H1 (cell line): ENCODE measurements at regions of chr17 and their contacts with region 1.

Region 1: DNA sequence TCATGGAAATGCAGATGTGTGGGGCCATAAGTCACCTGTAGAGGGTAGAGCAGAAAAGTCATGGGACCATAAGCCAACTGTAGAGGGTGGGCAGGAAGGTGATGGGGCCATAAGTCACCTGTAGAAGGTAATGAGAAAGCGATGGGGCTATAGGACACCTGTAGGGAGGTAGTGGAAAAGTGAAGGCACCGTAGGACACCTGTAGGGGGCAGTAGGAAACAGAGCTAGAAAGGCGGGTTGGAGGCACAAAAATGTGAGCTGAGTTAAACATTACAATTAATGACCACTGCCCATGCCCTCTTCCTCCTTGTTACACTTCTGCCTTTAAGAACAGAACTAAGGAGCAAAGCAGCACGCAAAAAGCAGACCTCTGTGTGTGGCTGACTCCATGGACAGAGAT is 150.1 kb downstream of the SHISA6 start:
- DNase-seq: peak in 1 of 2 experiments; percentile 73
- H3K4me3 ChIP-seq: no peak overlapping the region
- H3K27ac ChIP-seq: no peak overlapping the region
- H3K4me1 ChIP-seq: peaks cover 0 to 3% (median 0%) of the 10 kb centered on the region in 4 experiments; a peak in 1 of 7 replicates
- H3K27me3 ChIP-seq: no peaks in the 10 kb centered on the region
- CTCF ChIP-seq: peak; percentile 63 to 88 (median 81)
- EP300 ChIP-seq: no peak
- POLR2A ChIP-seq: no peak
- RAD21 ChIP-seq: peak; percentile 82 to 88

Region 2: DNA sequence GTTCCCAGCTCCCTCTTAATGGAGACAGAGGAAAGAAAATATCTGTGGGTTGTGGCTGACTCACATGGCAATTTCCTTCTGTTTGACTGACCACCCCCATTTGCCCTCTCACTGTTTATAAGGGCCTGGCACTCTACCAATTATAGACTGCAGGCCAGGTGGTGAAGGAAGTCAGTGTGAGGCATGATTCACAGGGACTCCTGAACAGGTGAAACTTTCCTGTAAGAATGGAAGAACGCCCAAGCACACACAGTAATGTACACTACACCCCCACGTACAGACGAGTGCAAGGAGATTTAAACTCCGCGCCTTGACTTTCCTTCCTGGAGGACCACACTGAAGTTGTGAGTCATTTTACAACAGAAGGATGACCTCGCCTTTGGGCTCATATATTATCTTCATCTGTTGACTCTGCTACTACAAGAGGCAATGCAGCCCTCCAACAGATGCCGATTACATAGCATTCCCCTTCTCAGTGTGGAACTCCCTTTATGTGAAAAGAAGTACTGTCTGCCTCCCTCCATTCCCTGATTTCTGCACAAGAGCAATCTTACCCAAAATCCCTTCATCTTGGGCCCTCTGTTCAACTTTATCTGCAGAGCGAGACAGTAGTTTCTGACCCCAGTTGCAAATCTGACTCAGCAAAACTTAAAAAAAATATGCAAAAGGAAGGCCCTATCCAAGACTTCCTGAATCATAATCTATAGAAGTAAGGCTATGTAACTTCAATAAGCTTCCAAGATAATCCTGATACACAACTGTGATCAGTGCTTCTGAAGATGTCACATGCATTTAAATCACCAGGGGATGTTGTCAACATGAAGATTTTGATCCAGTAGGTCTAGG is 13.5 kb after region 1 on chr17:
- CTCF ChIA-PET with region 1: interaction called, 11 read pairs
- POLR2A ChIA-PET with region 1: no interaction called
- DNase-seq: no peak
- H3K4me3 ChIP-seq: no peak overlapping the region
- H3K27ac ChIP-seq: no peak overlapping the region
- H3K4me1 ChIP-seq: no peaks in the 10 kb centered on the region
- H3K27me3 ChIP-seq: peaks cover 0 to under 1% (median 0%) of the 10 kb centered on the region in 4 experiments; a peak in 1 of 7 replicates
- CTCF ChIP-seq: no peak
- EP300 ChIP-seq: no peak
- POLR2A ChIP-seq: no peak
- RAD21 ChIP-seq: no peak

Region 3: DNA sequence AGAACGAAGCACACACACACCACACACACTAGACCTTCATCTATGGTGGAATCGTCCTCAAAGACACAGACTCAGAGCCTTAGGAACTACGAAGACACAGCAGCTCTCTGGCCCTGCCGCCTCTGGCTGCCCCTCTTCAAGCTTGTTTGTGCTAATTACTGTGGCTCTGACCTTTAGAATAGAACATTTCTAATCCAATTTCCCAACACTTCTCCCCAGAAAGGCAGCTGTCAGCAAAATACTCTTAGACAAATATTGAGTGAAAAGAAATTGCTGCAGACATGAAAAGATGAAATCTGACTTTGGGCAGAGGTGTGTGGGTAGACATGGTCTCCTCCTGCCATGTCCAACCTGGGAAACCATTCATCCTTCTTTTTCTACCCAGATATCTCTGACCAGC is 55.2 kb after region 1 on chr17:
- CTCF ChIA-PET with region 1: no interaction called
- POLR2A ChIA-PET with region 1: no interaction called
- DNase-seq: no peak
- H3K4me3 ChIP-seq: no peak overlapping the region
- H3K27ac ChIP-seq: no peak overlapping the region
- H3K4me1 ChIP-seq: no peaks in the 10 kb centered on the region
- H3K27me3 ChIP-seq: no peaks in the 10 kb centered on the region
- CTCF ChIP-seq: no peak
- EP300 ChIP-seq: no peak
- POLR2A ChIP-seq: no peak
- RAD21 ChIP-seq: no peak

Region 4: DNA sequence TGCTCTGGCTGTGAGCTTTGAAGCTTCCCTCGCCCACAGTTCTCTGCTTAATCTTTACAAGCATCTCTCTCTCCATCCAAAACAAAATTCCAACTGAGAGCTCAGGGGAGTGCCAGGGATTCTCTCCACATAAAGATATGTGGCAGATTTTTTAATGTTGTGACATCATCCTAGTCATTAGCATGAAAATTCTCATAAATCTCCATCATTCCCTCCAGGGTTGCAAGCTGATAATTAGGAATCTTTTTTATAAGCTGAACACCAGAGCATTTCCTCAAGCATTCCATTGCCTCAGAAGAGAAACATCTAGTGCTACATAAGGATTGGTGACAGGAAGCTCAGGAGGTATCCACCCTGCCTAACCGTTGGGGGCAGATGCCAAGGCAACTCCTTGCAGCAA is 124.8 kb after region 1 on chr17:
- CTCF ChIA-PET with region 1: no interaction called
- POLR2A ChIA-PET with region 1: no interaction called
- DNase-seq: no peak
- H3K4me3 ChIP-seq: no peak overlapping the region
- H3K27ac ChIP-seq: no peak overlapping the region
- H3K4me1 ChIP-seq: peaks cover 0 to 2% (median 0%) of the 10 kb centered on the region in 4 experiments; a peak in 1 of 7 replicates
- H3K27me3 ChIP-seq: no peaks in the 10 kb centered on the region
- CTCF ChIP-seq: no peak
- EP300 ChIP-seq: no peak
- POLR2A ChIP-seq: no peak
- RAD21 ChIP-seq: no peak

Region 5: GRCh38 chr17:11742886-11743285 is 351.8 kb after region 1 on chr17:
- CTCF ChIA-PET with region 1: interaction called, 15 read pairs
- POLR2A ChIA-PET with region 1: no interaction called
- DNase-seq: no peak
- H3K4me3 ChIP-seq: no peak overlapping the region
- H3K27ac ChIP-seq: no peak overlapping the region
- H3K4me1 ChIP-seq: no peaks in the 10 kb centered on the region
- H3K27me3 ChIP-seq: no peaks in the 10 kb centered on the region
- CTCF ChIP-seq: peak in 2 of 3 experiments; percentile 58 to 71; a peak in 3 of 4 replicates
- EP300 ChIP-seq: no peak
- POLR2A ChIP-seq: no peak
- RAD21 ChIP-seq: peak; percentile 81 to 83